ENCODE measurements at regions of chr1 and their contacts with region 1.

Region 1: DNA sequence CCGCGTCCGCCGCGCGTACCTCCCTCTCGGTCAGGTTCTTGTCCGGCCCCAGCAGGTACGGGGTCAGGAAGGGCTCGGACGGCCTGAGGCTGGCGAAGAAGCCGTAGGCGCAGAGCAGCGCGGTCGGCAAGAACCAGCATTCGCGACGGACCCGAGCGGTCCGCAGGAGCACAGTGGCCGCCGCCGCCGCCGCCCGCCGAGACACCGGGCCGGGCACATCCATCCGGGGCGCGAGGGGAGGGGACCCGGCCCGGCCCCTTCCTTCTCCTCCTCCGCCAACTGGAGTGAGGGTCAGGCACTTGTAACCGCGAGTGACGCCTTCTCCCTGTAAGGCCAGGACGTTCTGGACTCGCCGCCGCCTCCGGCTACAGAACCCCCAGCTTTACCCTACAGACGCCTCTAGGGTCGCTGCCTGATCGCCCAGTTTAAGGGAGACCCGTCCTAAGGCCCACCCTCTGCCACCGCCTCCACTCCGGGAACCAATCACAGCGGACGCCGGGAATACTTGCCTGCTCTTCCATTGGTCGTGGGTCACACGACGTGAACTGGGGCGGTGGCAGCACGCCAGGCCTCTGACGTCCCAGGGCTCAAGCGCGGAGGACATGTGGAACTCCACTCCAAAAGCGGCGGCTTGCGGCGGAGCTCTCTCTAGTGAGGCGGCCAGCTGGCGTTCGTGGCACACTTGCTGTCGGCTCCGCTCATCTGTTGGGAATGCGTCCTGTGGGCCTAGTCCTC is at the start of gene SLC19A2:
- DNase-seq: peak; percentile 99 to 100 (median 100)
- H3K4me3 ChIP-seq: peak within 1 kb of the TSS; percentile 74 to 100 (median 90)
- H3K27ac ChIP-seq: peak within 1 kb of the TSS; percentile 25 to 98 (median 92)
- H3K27me3 ChIP-seq: no peaks in the 10 kb centered on the region
- CTCF ChIP-seq: peak in 47 of 56 donors; percentile 8 to 65 (median 48)
- total RNA-seq, gene SLC19A2: 4.5 to 12.7 (median 7.8) TPM

Region 2: GRCh38 chr1:169367486-169368405 is 118.0 kb before region 1 on chr1 and contains the starts of genes BLZF1 and NME7:
- intact Hi-C with region 1: loop called (anchors 5 kb)
- DNase-seq: peak; percentile 90 to 99 (median 97)
- H3K4me3 ChIP-seq: peak within 1 kb of the TSS; percentile 62 to 98 (median 80)
- H3K27ac ChIP-seq: peak within 1 kb of the TSS in 56 of 59 donors; percentile 27 to 96 (median 84)
- H3K27me3 ChIP-seq: no peaks in the 10 kb centered on the region
- CTCF ChIP-seq: peak in 13 of 56 donors; percentile 4 to 42 (median 24)
- total RNA-seq, gene BLZF1: 20.9 to 36.7 (median 29.5) TPM
- total RNA-seq, gene NME7: 15.3 to 50.1 (median 28.3) TPM

Region 3: DNA sequence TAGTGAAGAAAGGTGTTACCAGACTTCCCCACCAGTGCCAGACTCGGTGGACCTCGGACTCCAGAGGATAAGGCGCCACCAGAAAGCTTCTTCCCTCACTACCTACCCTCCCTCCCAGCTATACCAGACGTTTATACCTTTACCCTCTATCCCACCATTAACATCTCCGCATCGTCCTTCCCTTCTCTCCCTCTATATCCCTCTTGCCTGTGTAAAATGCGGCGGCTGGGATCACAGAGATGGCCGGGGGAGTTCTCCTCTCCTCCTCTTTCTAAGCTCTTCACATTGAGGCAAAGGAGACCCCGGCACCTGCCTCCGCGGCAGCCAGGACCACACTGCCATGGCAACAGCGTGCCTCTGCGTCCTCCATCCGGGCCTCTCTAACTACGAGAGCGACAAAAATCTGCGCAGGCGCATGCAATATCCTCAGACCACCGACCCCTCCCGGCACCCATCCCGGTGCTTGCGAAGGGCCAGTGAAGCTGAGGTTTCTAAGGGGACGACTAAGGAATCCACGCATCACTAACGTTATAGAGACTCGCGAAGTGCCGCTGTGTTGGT is 58.5 kb before region 1 on chr1 and contains the start of gene CCDC181:
- intact Hi-C with region 1: loop called in 1 of 2 experiments (anchors 5 kb)
- DNase-seq: peak; percentile 62 to 89 (median 88)
- H3K4me3 ChIP-seq: peak within 1 kb of the TSS; percentile 49 to 90 (median 73)
- H3K27ac ChIP-seq: peak within 1 kb of the TSS in 31 of 59 donors; percentile 2 to 82 (median 45)
- H3K27me3 ChIP-seq: peaks cover 0 to 4% (median 0%) of the 10 kb centered on the region in 45 donors
- CTCF ChIP-seq: peak in 1 of 56 donors; percentile 16
- total RNA-seq, gene CCDC181: 3.7 to 15.9 (median 10.7) TPM

Region 4: DNA sequence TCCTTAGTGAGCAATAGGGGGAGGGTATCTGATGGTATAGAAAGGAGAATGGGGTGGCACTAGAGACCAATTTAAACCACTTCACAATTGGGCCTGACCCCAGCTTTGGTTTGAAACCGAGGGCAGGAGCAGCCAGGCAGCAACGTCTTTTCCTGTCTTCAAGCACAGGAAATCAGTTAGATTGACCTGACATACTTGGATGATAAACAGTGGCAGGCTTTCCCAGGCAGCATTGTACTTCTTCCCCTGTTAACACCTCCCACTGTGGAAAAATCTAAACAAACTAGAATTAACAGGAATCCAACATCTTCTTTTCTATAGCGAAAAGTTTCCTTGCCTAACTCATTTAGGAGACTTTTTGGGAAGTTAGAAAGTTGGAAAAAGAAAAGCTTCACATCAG is 185.1 kb after region 1 on chr1:
- intact Hi-C with region 1: no loop called
- DNase-seq: no peak
- H3K4me3 ChIP-seq: no peak overlapping the region
- H3K27ac ChIP-seq: no peak overlapping the region
- H3K27me3 ChIP-seq: no peaks in the 10 kb centered on the region
- CTCF ChIP-seq: no peak

Region 5: GRCh38 chr1:169794530-169795416 is 309.1 kb after region 1 on chr1 and contains the start of gene METTL18:
- intact Hi-C with region 1: loop called in 1 of 2 experiments (anchors 5 kb)
- DNase-seq: peak; percentile 82 to 95 (median 93)
- H3K4me3 ChIP-seq: peak within 1 kb of the TSS; percentile 49 to 100 (median 78)
- H3K27ac ChIP-seq: peak within 1 kb of the TSS; percentile 57 to 97 (median 91)
- H3K27me3 ChIP-seq: no peaks in the 10 kb centered on the region
- CTCF ChIP-seq: peak in 46 of 56 donors; percentile 8 to 78 (median 42)
- total RNA-seq, gene METTL18: 2.6 to 8.9 (median 5.6) TPM

Region 6: DNA sequence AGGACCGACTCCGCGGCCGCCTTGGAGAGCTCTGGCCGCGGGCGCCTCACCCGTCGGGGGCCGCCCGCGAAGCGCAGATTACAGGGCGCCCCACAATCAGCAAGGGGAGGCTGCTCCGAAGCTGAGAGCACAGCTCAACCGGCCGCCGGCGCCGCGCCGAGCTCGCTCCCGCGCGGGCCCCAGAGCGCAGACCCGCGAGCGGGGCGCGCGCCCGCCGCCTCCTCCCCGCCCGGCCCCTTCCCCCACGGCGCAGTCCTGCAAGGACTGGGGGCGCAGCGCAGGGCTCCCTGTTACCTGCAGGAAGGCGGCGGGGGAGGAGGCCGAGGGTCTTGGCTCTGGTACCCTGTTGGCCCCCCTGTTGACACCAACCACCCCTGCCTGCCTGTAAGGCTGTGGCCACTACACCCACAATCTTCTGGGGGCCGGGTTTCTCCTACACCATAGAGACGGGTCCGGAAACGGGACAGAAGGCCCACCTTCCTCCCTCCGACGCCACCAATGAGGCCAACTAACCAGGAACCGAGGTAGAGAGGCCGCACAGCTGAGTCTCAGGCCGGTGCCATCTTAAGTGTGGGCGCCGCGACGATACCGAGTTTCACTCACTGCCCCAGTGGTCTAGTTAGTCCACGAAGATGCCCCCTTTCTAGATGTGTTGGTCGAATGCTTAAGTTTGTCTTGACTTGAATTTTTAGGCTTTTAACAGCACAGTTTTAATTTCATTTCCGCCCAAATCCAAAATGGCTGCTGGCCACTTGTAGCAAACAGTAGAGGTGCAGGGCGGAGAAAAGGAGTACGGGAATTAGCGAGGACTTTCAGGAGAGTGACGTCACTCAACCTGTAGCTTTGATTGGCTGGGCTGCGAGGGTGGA is 408.0 kb after region 1 on chr1 and contains the start of gene SCYL3:
- intact Hi-C with region 1: loop called in 1 of 2 experiments (anchors 5 kb)
- DNase-seq: peak; percentile 83 to 97 (median 96)
- H3K4me3 ChIP-seq: peak within 1 kb of the TSS; percentile 50 to 99 (median 91)
- H3K27ac ChIP-seq: peak within 1 kb of the TSS; percentile 83 to 100 (median 99)
- H3K27me3 ChIP-seq: no peaks in the 10 kb centered on the region
- CTCF ChIP-seq: peak in 23 of 56 donors; percentile 2 to 60 (median 14)
- total RNA-seq, gene SCYL3: 5.2 to 13.9 (median 10.1) TPM